Activated CD8-positive, alpha-beta T cell treated with anti-CD3 and anti-CD28 coated beads, Interleukin-2, amount 10 ng/mL, durations not matched to agents 7 days and 5 days (primary cell): ENCODE measurements at regions of chr14 and their contacts with region 1.

Region 1: GRCh38 chr14:99271951-99272631 is at the start of gene BCL11B:
- DNase-seq: peak; percentile 96
- ATAC-seq: peak; percentile 74
- H3K4me3 Mint-ChIP-seq: peak within 1 kb of the TSS; percentile 88
- H3K27ac Mint-ChIP-seq: peak within 1 kb of the TSS; percentile 93
- H3K4me1 Mint-ChIP-seq: peaks cover 27% of the 10 kb centered on the region
- H3K27me3 Mint-ChIP-seq: peaks cover 17% of the 10 kb centered on the region
- total RNA-seq, gene BCL11B: 68.6 to 70.6 TPM

Region 2: GRCh38 chr14:98189062-98189461 is 1083.0 kb before region 1 on chr14:
- CTCF ChIA-PET with region 1: interaction called, 8 read pairs
- POLR2A ChIA-PET with region 1: interaction called, 14 read pairs
- DNase-seq: peak; percentile 68
- ATAC-seq: peak; percentile 69
- H3K4me3 Mint-ChIP-seq: peak overlapping the region; percentile 58
- H3K27ac Mint-ChIP-seq: peak overlapping the region; percentile 92
- H3K4me1 Mint-ChIP-seq: peaks cover 96% of the 10 kb centered on the region
- H3K27me3 Mint-ChIP-seq: no peaks in the 10 kb centered on the region

Region 3: GRCh38 chr14:99192028-99192621 is 80.0 kb before region 1 on chr14:
- CTCF ChIA-PET with region 1: interaction called, 86 read pairs
- POLR2A ChIA-PET with region 1: interaction called, 14 read pairs
- DNase-seq: peak; percentile 56
- ATAC-seq: peak; percentile 20
- H3K4me3 Mint-ChIP-seq: peak overlapping the region; percentile 88
- H3K27ac Mint-ChIP-seq: peak overlapping the region; percentile 95
- H3K4me1 Mint-ChIP-seq: peaks cover 93% of the 10 kb centered on the region
- H3K27me3 Mint-ChIP-seq: no peaks in the 10 kb centered on the region

Region 4: DNA sequence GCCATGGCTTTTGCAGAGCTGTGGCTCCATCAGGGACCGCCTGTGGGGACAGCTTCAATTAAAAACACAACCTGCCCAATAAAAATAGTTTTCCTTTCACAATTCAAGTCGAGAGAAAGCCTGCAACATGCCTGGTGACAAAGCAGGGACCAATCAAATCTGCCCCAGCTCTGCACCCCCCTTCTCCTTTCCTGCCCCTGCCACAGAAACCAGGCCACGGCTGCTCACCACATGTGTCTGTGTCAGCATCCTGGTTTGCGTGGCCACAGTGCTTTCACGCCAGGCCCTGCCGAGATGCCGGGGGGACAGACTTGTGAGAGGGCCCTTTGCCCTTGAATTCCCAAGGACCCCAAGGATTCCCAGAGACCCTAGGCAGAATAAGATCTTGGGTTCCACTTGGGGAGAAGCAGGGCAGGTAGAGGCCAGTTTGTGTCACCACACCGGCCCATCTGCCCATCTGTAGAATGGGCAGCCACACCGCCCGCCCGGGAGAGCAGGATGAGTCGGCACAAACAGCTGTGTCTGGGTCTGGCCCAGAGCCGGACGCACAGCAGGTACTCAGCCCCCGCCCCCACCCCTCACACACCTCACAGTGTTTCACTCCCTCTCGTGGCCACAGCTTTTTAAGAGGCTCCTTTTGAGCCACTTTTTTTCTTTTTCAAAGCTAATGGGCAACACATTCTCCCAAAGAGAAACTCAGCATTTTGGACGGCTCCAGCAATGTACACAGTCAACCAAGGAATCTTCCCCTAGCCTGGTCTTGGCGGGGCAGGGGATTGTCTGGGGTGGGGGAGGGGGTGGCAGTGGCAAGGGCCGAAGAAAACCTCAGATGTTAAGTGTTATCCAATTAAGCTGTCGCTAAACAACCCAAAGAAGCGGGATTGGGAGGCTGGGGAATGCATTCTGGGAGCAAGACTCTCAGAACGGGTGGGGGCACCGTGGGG is 41.6 kb before region 1 on chr14:
- CTCF ChIA-PET with region 1: interaction called, 373 read pairs
- POLR2A ChIA-PET with region 1: interaction called, 767 read pairs
- DNase-seq: peak; percentile 93
- ATAC-seq: peak; percentile 60
- H3K4me3 Mint-ChIP-seq: peak overlapping the region; percentile 75
- H3K27ac Mint-ChIP-seq: peak overlapping the region; percentile 98
- H3K4me1 Mint-ChIP-seq: peaks cover 95% of the 10 kb centered on the region
- H3K27me3 Mint-ChIP-seq: no peaks in the 10 kb centered on the region

Region 5: GRCh38 chr14:99252940-99253868 is 18.9 kb before region 1 on chr14:
- CTCF ChIA-PET with region 1: interaction called, 41 read pairs
- POLR2A ChIA-PET with region 1: interaction called, 767 read pairs
- DNase-seq: peak; percentile 72
- ATAC-seq: peak; percentile 32
- H3K4me3 Mint-ChIP-seq: peak overlapping the region; percentile 76
- H3K27ac Mint-ChIP-seq: peak overlapping the region; percentile 95
- H3K4me1 Mint-ChIP-seq: peaks cover 98% of the 10 kb centered on the region
- H3K27me3 Mint-ChIP-seq: no peaks in the 10 kb centered on the region

Region 6: GRCh38 chr14:99287269-99287942 is 15.3 kb after region 1 on chr14:
- CTCF ChIA-PET with region 1: interaction called, 10 read pairs
- POLR2A ChIA-PET with region 1: interaction called, 6 read pairs
- DNase-seq: peak; percentile 49
- ATAC-seq: peak; percentile 76
- H3K4me3 Mint-ChIP-seq: peak overlapping the region; percentile 51
- H3K27ac Mint-ChIP-seq: peak overlapping the region; percentile 79
- H3K4me1 Mint-ChIP-seq: peaks cover 15% of the 10 kb centered on the region
- H3K27me3 Mint-ChIP-seq: no peaks in the 10 kb centered on the region

Region 7: GRCh38 chr14:99415496-99416281 is 143.6 kb after region 1 on chr14:
- CTCF ChIA-PET with region 1: interaction called, 10 read pairs
- POLR2A ChIA-PET with region 1: no interaction called
- DNase-seq: peak; percentile 80
- ATAC-seq: peak; percentile 99
- H3K4me3 Mint-ChIP-seq: no peak overlapping the region
- H3K27ac Mint-ChIP-seq: no peak overlapping the region
- H3K4me1 Mint-ChIP-seq: peaks cover 18% of the 10 kb centered on the region
- H3K27me3 Mint-ChIP-seq: no peaks in the 10 kb centered on the region